ENCODE measurements at regions of chrX and their contacts with region 1.

Region 1: GRCh38 chrX:131677655-131678628 is 134.1 kb downstream of the OR13H1 start:
- DNase-seq: peak; percentile 16 to 55 (median 37)
- H3K4me3 ChIP-seq: no peak overlapping the region
- H3K27ac ChIP-seq: no peak overlapping the region
- H3K4me1 ChIP-seq: no peaks in the 10 kb centered on the region
- H3K27me3 ChIP-seq: no peaks in the 10 kb centered on the region
- CTCF ChIP-seq: peak in 2 of 3 donors; percentile 21 to 25
- EP300 ChIP-seq: no peak
- POLR2A ChIP-seq: no peak

Region 2: DNA sequence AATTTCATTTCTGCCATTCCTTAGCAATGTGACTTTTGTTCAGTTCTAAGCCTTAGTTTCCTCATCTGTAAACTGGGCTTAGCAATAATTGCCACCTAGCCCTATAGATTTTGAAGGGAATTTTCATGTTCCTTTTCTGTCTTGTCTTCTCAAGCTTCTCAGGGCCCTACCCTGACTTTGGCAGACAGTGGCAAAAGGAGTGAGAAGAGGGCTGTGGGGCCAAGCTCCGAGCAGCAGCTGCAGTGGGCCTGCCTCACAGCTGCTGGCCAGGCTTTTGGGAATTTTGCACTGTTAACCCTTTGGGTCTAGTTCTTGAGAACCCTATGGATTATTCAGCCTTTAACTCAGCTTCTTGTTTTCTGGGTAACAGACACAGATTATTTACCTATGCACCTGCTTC is 321.2 kb before region 1 on chrX:
- intact Hi-C with region 1: no loop called
- DNase-seq: no peak
- H3K4me3 ChIP-seq: no peak overlapping the region
- H3K27ac ChIP-seq: no peak overlapping the region
- H3K4me1 ChIP-seq: no peaks in the 10 kb centered on the region
- H3K27me3 ChIP-seq: no peaks in the 10 kb centered on the region
- CTCF ChIP-seq: no peak
- EP300 ChIP-seq: no peak
- POLR2A ChIP-seq: no peak

Region 3: DNA sequence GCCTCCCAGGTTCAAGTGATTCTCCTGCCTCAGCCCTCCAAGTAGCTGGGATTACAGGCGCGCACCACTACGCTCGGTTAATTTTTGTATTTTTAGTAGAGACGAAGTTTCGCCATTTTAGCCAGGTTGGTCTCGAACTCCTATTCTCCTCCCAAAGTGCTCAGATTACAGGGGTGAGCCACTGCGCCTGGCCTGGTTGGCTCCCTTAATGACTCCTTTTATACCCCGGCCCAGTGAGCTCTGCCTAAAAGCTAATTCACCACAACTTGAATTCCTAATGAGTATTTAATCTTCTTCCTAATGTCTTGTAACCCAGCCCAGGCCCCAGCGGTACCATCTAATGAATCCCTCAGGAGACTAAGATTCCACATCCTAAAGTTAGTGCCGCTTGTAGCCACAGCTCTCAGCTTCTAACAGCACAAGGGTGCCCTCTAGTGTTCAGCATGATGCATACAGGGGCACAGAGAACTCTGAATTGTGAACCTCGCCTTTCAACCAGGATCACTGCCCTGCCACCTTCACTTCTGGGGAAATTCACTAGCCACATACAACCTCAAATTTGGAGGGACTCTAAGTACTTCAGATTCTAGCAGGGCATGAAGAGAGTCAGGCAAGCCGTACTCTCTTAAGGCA is 44.5 kb before region 1 on chrX:
- intact Hi-C with region 1: no loop called
- DNase-seq: peak in 4 of 5 donors; percentile 20 to 40 (median 22)
- H3K4me3 ChIP-seq: no peak overlapping the region
- H3K27ac ChIP-seq: no peak overlapping the region
- H3K4me1 ChIP-seq: no peaks in the 10 kb centered on the region
- H3K27me3 ChIP-seq: no peaks in the 10 kb centered on the region
- CTCF ChIP-seq: no peak
- EP300 ChIP-seq: no peak
- POLR2A ChIP-seq: no peak

Region 4: DNA sequence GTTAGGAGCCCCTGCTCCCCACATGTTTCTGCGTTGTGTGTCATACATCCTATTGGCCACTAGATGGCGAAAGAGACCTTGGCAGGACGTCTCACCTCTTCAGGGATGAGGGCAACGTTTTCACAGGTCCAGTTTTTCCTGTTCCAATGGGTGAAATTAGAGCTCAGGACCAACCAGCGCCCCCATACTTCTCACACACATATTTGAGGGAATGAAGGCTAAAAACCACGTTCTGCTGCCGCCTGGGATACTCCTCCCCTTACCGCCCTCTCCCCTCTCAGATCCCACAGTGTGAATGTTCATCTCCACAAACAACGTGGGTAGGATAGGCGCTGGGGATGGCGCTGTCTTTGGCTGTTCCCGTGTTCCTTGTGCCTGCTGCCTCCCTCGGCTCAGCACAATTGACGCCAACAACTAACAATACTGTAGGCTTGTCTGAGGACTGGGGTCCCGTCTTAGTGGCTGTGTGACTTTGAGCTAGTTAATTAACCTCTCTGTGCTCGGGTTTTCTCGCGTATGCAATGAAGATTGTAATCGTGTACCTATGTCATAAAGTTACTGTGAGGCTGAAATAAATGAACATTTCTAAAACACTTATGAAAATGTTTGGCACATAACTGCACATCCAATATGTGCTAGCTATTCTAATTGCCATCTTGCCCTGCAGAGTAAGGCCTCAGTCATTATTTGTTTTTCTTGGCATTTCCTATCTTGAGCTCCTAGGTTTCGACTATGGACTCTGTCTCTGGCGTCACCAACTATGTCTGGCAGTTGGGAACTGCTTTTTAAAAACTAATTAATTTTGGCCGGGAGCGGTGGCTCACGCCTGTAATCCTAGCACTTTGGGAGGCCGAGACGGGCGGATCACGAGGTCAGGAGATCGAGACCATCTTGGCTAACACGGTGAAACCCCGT is 163.8 kb after region 1 on chrX:
- intact Hi-C with region 1: loop called in 2 of 4 experiments (anchors 2 to 5 kb)
- DNase-seq: no peak
- H3K4me3 ChIP-seq: no peak overlapping the region
- H3K27ac ChIP-seq: no peak overlapping the region
- H3K4me1 ChIP-seq: no peaks in the 10 kb centered on the region
- H3K27me3 ChIP-seq: no peaks in the 10 kb centered on the region
- CTCF ChIP-seq: peak; percentile 51 to 67 (median 62)
- EP300 ChIP-seq: no peak
- POLR2A ChIP-seq: no peak

Region 5: GRCh38 chrX:131894987-131895386 is 217.0 kb after region 1 on chrX:
- intact Hi-C with region 1: no loop called
- DNase-seq: no peak
- H3K4me3 ChIP-seq: no peak overlapping the region
- H3K27ac ChIP-seq: no peak overlapping the region
- H3K4me1 ChIP-seq: no peaks in the 10 kb centered on the region
- H3K27me3 ChIP-seq: no peaks in the 10 kb centered on the region
- CTCF ChIP-seq: no peak
- EP300 ChIP-seq: no peak
- POLR2A ChIP-seq: no peak

Region 6: DNA sequence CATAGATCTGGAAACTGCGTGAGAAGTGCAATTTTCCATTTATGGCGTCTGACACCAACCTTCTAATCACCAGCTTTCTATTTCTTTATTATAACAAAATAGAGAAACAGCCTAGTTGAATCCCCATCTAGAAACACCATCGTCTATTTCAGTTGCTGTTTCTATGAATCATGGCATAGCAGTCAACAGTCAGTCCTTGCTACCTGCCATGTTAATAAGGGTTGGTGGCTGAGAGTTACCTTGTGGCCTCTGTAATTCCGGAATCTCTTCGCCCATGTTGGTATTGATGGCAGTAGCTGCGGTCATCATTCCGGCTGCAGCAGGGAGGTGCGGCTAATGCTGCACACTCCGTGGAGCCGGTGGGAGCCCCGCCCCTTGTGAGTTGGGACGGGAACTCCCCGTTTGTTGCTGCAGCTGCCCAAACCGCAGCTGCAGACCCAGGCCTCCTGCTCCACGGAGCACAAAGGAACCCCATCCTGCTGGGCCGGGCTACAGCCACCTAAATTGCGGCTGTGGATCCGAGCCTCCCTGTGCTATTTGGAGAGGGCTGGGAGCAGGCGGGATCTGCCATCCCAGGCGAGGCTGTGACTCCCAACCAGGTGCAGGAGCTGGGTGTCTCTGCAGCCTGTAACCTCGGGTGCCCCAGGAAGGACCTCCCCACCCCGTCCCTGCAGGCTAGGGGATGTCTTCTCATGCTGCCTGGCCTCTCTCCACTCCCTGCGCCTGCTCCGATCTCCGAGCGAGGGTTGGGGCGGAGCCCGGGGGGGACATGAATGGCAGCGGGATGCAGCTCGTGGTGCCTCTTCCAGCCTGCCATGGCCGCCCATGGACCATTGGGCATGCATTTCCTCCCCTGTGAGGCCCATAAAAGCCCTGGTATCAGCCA is 229.8 kb after region 1 on chrX:
- intact Hi-C with region 1: no loop called
- DNase-seq: no peak
- H3K4me3 ChIP-seq: no peak overlapping the region
- H3K27ac ChIP-seq: no peak overlapping the region
- H3K4me1 ChIP-seq: no peaks in the 10 kb centered on the region
- H3K27me3 ChIP-seq: no peaks in the 10 kb centered on the region
- CTCF ChIP-seq: no peak
- EP300 ChIP-seq: no peak
- POLR2A ChIP-seq: no peak

Measured in ovary (tissue), 10 donors.